AG04449 (cell line): ENCODE measurements at regions of chr2 and their contacts with region 1.

Region 1: DNA sequence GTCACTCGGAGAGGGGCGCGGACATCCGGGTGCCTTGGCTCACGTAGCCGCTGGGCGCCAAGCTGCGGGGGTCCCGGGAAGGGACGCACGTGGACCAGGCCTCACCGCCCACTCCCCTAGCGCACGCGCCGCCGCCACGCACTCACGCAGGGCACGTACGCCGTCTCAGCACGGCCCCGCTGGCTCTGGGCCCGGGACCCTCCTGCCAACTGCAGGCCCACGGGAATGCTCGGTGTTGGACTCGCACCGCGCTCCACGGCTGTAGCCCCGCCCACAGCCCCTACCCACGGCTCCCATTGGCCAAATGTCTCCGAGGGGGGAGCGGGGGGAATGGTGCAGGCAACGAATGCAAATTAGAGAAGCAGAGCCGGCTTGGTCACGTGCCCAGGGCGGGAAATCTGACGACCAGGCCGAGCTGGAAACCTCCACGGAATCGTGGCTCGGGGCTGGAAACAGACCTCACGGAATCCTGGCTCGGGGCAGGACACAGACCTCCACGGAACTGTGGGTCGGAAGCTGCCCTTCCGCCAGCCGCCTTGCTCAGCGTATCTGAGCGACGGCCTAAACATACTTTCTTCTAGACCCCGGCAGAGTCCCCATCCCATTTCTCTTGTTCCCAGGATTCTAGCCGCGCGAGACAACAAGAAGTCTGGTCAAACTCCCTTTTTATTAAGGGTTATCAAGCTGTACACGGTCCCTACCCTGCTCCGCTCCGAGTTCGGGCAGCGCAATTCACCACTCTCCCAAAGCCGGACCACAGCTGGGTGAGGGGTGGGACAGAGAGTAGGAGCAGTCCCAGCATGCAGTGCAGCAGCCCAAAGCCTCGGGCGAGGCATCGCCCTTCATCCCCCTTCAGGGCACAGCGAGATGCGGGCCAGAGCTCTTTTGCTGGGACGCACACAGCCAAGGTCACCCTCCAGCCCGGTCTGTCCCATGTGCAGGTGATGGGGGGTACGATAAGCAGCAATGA is at the start of gene ABCB6:
- DNase-seq: no peak
- H3K4me3 ChIP-seq: peak within 1 kb of the TSS; percentile 69
- CTCF ChIP-seq: no peak

Region 2: DNA sequence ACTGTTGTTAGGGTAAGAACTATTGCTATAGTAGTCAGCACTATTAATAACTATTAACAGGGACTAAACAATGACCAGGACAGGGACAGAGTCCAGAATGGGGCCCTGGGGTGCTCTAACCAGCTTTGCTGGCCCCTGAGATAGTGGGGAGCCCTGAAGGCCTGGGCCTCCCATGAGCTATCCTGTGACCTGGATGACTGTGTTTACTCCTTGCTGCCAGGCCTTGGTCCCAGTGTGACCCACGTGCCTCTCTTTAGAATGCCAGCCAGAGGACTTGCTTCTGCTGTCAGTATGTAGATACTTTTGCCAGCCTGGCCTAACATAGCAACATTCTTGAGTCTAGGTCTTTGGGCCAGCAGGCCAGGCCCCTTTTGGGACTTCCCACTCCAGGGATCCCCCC is 248.1 kb before region 1 on chr2:
- CTCF ChIA-PET with region 1: no interaction called
- POLR2A ChIA-PET with region 1: no interaction called
- DNase-seq: no peak
- H3K4me3 ChIP-seq: no peak overlapping the region
- CTCF ChIP-seq: no peak

Region 3: GRCh38 chr2:219171231-219171651 is 47.8 kb before region 1 on chr2:
- CTCF ChIA-PET with region 1: interaction called, 14 read pairs
- POLR2A ChIA-PET with region 1: interaction called, 9 read pairs
- DNase-seq: peak; percentile 75
- H3K4me3 ChIP-seq: no peak overlapping the region
- CTCF ChIP-seq: peak; percentile 27

Region 4: GRCh38 chr2:219206442-219207253 is 12.4 kb before region 1 on chr2 and contains the start of gene ZFAND2B:
- CTCF ChIA-PET with region 1: interaction called, 9 read pairs
- POLR2A ChIA-PET with region 1: interaction called, 27 read pairs
- DNase-seq: no peak
- H3K4me3 ChIP-seq: peak within 1 kb of the TSS; percentile 86
- CTCF ChIP-seq: no peak

Region 5: GRCh38 chr2:219229305-219230058 is 10.5 kb after region 1 on chr2 and contains the starts of genes ANKZF1 and ATG9A:
- CTCF ChIA-PET with region 1: interaction called, 11 read pairs
- POLR2A ChIA-PET with region 1: interaction called, 26 read pairs
- DNase-seq: peak; percentile 86
- H3K4me3 ChIP-seq: peak within 1 kb of the TSS; percentile 92
- CTCF ChIP-seq: no peak

Region 6: GRCh38 chr2:219245148-219245898 is 26.3 kb after region 1 on chr2 and contains the starts of genes GLB1L and STK16:
- CTCF ChIA-PET with region 1: interaction called, 3 read pairs
- POLR2A ChIA-PET with region 1: interaction called, 13 read pairs
- DNase-seq: peak; percentile 57
- H3K4me3 ChIP-seq: peak within 1 kb of the TSS; percentile 98
- CTCF ChIP-seq: no peak

Region 7: DNA sequence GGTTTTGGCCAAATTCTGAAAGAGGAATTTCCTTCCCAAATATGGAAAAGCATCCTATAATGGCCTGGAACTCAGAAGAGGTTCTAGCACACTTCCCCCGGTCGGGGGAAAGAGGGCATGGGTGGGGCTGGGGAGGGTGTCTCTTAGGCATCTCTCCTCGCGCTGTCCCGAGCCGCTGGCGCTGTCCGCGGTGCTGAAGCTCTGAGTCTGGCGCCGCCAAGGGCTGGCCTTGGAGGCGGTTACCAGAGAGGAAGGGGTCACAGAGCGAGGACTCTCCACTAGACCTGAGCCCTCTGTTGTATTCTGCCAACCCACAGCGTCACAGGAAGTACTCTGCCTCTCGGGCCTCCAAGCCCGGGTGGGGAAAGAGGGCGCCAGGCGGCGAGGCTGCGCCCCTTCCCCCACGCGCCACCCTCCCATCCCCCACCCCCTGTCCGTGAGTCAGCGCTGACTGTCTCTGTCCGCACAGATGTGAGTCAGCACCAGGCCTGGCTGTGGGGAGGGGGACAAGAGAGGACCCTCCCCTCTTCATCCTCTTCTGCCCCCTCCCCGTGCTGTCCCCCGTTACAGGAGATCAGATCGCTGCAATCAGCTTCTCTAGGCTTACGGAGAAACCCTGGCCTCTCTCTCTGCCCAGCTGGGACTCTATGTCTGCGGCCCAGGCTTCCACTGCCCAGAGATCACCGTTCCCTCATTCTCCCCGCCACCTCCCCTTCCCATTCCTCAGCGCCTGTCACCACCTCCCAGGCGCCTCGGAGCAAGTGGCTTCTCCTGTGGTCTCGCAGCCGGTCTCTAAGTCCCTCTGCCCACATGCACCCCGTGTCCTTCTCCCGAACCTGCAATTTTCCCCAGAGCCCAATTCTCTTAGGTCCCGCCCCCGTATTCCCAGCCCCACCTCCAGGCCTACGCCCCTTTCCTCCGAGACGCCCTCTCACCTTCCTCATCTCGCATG is 89.4 kb after region 1 on chr2:
- CTCF ChIA-PET with region 1: no interaction called
- POLR2A ChIA-PET with region 1: no interaction called
- DNase-seq: no peak
- H3K4me3 ChIP-seq: peak overlapping the region; percentile 49
- CTCF ChIP-seq: no peak